ENCODE measurements at regions of chr11 and their contacts with region 1.

Region 1: GRCh38 chr11:44095506-44096394 is at the start of gene EXT2:
- DNase-seq: peak; percentile 71 to 90 (median 83)
- ATAC-seq: peak; percentile 97
- H3K4me3 ChIP-seq: peak within 1 kb of the TSS; percentile 74
- H3K4me3 Mint-ChIP-seq: peak within 1 kb of the TSS; percentile 78 to 94 (median 87)
- H3K27ac ChIP-seq: peak within 1 kb of the TSS; percentile 76
- H3K27ac Mint-ChIP-seq: peak within 1 kb of the TSS in 8 of 9 donors; percentile 19 to 86 (median 70)
- H3K4me1 ChIP-seq: peaks cover 9 to 15% of the 10 kb centered on the region in 2 donors
- H3K4me1 Mint-ChIP-seq: peaks cover 25 to 53% (median 40%) of the 10 kb centered on the region in 7 donors
- H3K27me3 ChIP-seq: no peaks in the 10 kb centered on the region
- H3K27me3 Mint-ChIP-seq: peaks cover 0 to 3% (median 0%) of the 10 kb centered on the region in 5 donors
- total RNA-seq, gene EXT2: 27.2 to 33.4 (median 30.7) TPM

Region 2: DNA sequence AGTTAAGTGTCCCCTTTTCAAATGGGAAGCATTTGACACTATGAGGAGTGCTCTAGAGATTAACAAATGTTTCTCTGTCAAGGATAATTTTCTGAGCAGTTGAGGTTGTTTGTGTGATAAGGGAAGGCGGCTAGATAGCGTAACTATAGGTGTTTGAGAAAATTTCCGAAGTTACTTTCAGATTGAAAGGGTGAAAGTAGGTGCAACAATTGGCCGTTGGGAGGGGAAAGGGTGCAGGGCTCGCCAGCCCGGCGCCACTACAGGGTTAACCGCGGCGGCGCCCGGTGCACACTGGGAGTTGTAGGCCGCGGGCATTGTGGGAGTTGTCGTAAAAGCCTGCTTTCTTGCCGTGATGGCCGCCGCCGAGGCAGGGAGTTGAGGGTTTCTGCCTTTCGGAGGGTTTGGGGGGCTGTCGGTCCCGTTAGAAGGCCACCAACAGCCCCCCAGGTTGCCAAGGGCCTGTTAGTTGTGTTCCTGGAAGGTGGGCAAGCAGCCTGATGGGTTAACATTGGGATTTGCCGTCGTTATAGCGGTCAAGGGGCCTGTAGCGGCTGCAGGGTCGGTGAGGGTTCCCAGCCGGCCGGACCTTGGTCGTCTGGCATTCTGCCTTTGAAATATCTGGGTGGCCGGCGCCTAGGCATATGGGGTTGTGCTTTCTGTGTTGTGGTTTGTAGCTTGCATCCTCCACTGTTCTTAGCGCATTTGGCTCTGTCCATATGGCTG is 451.7 kb before region 1 on chr11:
- CTCF ChIA-PET with region 1: no interaction called
- POLR2A ChIA-PET with region 1: no interaction called
- intact Hi-C with region 1: loop called in 1 of 2 experiments (anchors 10 kb)
- DNase-seq: peak; percentile 70 to 89 (median 86)
- ATAC-seq: peak; percentile 100
- H3K4me3 ChIP-seq: peak overlapping the region; percentile 95
- H3K4me3 Mint-ChIP-seq: peak overlapping the region; percentile 87 to 98 (median 94)
- H3K27ac ChIP-seq: peak overlapping the region; percentile 85
- H3K27ac Mint-ChIP-seq: peak overlapping the region; percentile 51 to 95 (median 90)
- H3K4me1 ChIP-seq: peaks cover 7 to 10% of the 10 kb centered on the region in 2 donors
- H3K4me1 Mint-ChIP-seq: peaks cover 7 to 31% (median 23%) of the 10 kb centered on the region in 7 donors
- H3K27me3 ChIP-seq: no peaks in the 10 kb centered on the region
- H3K27me3 Mint-ChIP-seq: peaks cover 12 to 18% (median 17%) of the 10 kb centered on the region in 5 donors

Region 3: GRCh38 chr11:43880640-43881159 is 215.1 kb before region 1 on chr11 and contains the start of gene ALKBH3:
- CTCF ChIA-PET with region 1: no interaction called
- POLR2A ChIA-PET with region 1: no interaction called
- intact Hi-C with region 1: loop called in 1 of 2 experiments (anchors 2 kb)
- DNase-seq: peak; percentile 78 to 92 (median 90)
- ATAC-seq: peak; percentile 100
- H3K4me3 ChIP-seq: peak within 1 kb of the TSS; percentile 90
- H3K4me3 Mint-ChIP-seq: peak within 1 kb of the TSS; percentile 87 to 96 (median 90)
- H3K27ac ChIP-seq: peak within 1 kb of the TSS; percentile 80
- H3K27ac Mint-ChIP-seq: peak within 1 kb of the TSS; percentile 82 to 97 (median 88)
- H3K4me1 ChIP-seq: peaks cover 16 to 19% of the 10 kb centered on the region in 2 donors
- H3K4me1 Mint-ChIP-seq: peaks cover 12 to 47% (median 36%) of the 10 kb centered on the region in 7 donors
- H3K27me3 ChIP-seq: no peaks in the 10 kb centered on the region
- H3K27me3 Mint-ChIP-seq: peaks cover 0 to 22% (median 13%) of the 10 kb centered on the region in 5 donors
- total RNA-seq, gene ALKBH3: 28.9 to 32.8 (median 30.2) TPM

Region 4: GRCh38 chr11:44110231-44110679 is 14.5 kb after region 1 on chr11:
- CTCF ChIA-PET with region 1: interaction called, 16 read pairs
- POLR2A ChIA-PET with region 1: no interaction called
- intact Hi-C with region 1: loop called (anchors 1 kb)
- DNase-seq: peak in 8 of 9 donors; percentile 12 to 54 (median 38)
- ATAC-seq: peak; percentile 91
- H3K4me3 ChIP-seq: no peak overlapping the region
- H3K4me3 Mint-ChIP-seq: peak overlapping the region in 3 of 10 donors; percentile 10 to 45 (median 25)
- H3K27ac ChIP-seq: no peak overlapping the region
- H3K27ac Mint-ChIP-seq: peak overlapping the region in 2 of 9 donors; percentile 30 to 74
- H3K4me1 ChIP-seq: no peaks in the 10 kb centered on the region
- H3K4me1 Mint-ChIP-seq: peaks cover 6 to 14% (median 8%) of the 10 kb centered on the region in 7 donors
- H3K27me3 ChIP-seq: no peaks in the 10 kb centered on the region
- H3K27me3 Mint-ChIP-seq: no peaks in the 10 kb centered on the region

Region 5: DNA sequence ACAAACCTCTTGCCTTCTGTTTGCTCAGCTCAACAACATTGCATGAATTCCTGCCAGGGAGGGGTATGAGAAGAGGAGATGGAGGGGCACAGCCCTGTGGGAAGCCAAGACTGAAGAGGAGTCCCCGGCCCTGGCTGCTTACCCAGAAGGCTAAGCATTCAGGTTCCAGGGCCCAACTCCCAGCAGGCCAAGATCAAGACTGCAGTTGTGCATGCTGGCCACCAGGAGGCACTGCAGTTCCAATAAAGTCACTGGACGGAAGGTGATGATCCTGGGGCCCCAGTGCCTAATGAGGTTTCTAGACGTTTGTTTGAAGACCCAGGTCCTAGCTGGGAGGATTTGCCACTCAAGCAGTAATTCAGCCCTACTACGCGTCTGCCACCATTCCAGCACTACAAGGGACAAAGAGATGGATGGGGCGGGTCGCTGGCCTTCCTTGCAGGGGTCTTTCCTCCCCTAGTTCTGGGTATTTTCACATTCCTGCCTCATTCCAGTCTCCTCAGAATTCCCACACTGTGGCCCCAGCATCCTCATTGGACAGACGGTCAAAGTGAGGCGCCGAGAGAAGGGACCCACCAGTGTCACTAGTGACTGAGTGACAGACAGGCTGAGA is 190.6 kb after region 1 on chr11:
- CTCF ChIA-PET with region 1: no interaction called
- POLR2A ChIA-PET with region 1: no interaction called
- intact Hi-C with region 1: loop called in 1 of 2 experiments (anchors 10 kb)
- DNase-seq: peak in 8 of 9 donors; percentile 17 to 56 (median 40)
- ATAC-seq: peak; percentile 67
- H3K4me3 ChIP-seq: no peak overlapping the region
- H3K4me3 Mint-ChIP-seq: no peak overlapping the region
- H3K27ac ChIP-seq: no peak overlapping the region
- H3K27ac Mint-ChIP-seq: peak overlapping the region in 1 of 9 donors; percentile 48
- H3K4me1 ChIP-seq: no peaks in the 10 kb centered on the region
- H3K4me1 Mint-ChIP-seq: peaks cover 0 to 4% (median 0%) of the 10 kb centered on the region in 7 donors
- H3K27me3 ChIP-seq: no peaks in the 10 kb centered on the region
- H3K27me3 Mint-ChIP-seq: peaks cover 0 to 14% (median 3%) of the 10 kb centered on the region in 5 donors

Region 6: GRCh38 chr11:44519989-44520737 is 424.4 kb after region 1 on chr11:
- CTCF ChIA-PET with region 1: no interaction called
- POLR2A ChIA-PET with region 1: interaction called, 3 read pairs
- intact Hi-C with region 1: loop called in 1 of 2 experiments (anchors 5 kb)
- DNase-seq: no peak
- ATAC-seq: no peak
- H3K4me3 ChIP-seq: no peak overlapping the region
- H3K4me3 Mint-ChIP-seq: no peak overlapping the region
- H3K27ac ChIP-seq: no peak overlapping the region
- H3K27ac Mint-ChIP-seq: no peak overlapping the region
- H3K4me1 ChIP-seq: no peaks in the 10 kb centered on the region
- H3K4me1 Mint-ChIP-seq: peaks cover 0 to 4% (median 3%) of the 10 kb centered on the region in 7 donors
- H3K27me3 ChIP-seq: no peaks in the 10 kb centered on the region
- H3K27me3 Mint-ChIP-seq: peaks cover 14 to 41% (median 22%) of the 10 kb centered on the region in 5 donors

Region 7: DNA sequence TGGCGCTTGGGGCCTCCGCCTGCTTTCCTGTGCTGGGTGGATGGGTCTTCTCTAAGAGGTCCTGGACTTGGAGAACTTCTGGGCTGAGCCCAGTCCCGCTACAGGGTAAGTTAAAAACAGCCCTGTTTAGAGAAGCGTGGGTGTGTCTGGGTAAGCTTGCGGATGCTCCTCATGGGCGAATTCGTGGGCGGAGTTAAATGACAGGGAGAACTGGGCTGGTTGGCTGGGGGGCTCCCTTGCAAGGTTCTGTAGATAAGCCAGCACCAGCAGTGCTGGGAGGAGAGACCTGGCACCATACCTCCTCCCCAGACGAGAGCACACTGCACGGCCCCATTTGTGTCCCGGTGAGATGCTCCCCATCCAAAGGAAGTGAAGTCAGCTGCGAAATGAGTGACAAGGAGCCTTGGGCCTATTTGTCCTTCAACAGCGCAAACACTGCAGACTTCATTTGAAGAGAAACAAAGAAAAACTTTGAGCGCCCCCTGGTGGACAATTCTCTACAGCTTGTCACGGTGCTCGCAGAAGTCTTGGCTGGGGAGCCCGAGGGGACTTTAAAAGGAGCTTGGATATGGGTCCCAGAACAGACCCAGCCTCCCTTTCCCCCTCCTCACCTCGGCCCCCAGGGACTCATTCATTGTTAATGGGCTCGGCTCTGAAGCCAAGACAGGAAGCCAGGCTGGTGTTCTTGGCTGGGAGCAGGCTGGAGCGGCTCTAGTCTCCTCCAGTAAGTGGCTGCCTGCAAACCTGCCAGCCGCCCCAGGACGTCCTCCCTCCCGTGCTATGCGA is 815.5 kb after region 1 on chr11:
- CTCF ChIA-PET with region 1: no interaction called
- POLR2A ChIA-PET with region 1: no interaction called
- intact Hi-C with region 1: loop called in 1 of 2 experiments (anchors 2 kb)
- DNase-seq: peak; percentile 57 to 84 (median 78)
- ATAC-seq: peak; percentile 78
- H3K4me3 ChIP-seq: no peak overlapping the region
- H3K4me3 Mint-ChIP-seq: no peak overlapping the region
- H3K27ac ChIP-seq: no peak overlapping the region
- H3K27ac Mint-ChIP-seq: peak overlapping the region in 4 of 9 donors; percentile 14 to 55 (median 30)
- H3K4me1 ChIP-seq: no peaks in the 10 kb centered on the region
- H3K4me1 Mint-ChIP-seq: peaks cover 4 to 9% (median 7%) of the 10 kb centered on the region in 7 donors
- H3K27me3 ChIP-seq: no peaks in the 10 kb centered on the region
- H3K27me3 Mint-ChIP-seq: no peaks in the 10 kb centered on the region